GM23248 (cell line): ENCODE measurements at regions of chr5 and their contacts with region 1.

Region 1: GRCh38 chr5:170100066-170100943 is 5.4 kb upstream of the FOXI1 start:
- DNase-seq: peak; percentile 79
- H3K4me3 ChIP-seq: no peak overlapping the region
- H3K27ac ChIP-seq: no peak overlapping the region
- H3K4me1 ChIP-seq: 0 out of 2 replicates have a peak, but pooled peaks cover 6% of the 10 kb centered on the region
- H3K27me3 ChIP-seq: no peaks in the 10 kb centered on the region

Region 2: DNA sequence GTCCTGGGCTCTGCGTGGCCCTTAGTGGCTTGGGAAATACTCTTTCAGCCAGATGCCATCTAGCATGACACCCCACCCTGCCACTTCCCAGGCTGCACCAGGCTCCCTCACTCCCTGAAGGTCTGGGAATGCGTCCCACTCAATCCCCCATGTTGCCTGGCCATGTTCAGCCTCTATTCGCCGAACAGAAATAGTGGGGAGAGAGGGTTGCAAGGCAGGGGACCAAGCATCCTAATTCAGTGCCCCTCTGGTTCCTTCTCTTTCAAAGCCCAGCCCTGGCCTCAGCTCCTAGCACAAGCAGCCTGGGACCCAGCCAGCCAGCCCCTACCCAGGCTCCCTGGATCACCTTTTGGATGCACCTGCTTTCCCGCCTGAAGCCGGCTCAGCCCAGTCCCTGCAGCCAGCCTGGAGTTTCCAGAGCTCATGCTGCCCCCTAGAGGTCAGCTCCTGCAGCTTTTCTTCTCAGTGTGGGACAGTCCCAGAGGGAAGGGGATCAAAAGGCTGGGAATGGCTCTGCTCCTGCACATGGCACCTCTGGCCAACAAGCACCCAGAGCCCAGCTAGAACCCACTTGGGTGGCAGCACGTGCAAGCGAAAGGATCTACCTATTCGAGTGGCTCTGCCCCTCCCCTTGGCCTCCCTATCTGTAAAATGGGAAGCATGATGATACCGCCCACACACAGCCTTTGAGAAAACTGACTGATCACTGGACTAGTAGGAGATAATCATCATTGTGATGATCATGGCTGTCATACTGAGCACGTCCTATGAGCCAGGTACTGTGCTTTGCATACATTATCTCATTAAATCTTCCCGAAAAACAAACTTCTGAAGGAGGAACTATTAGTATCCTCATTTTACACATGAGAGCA is 83.7 kb after region 1 on chr5:
- in situ Hi-C with region 1: loop called (anchors 10 kb)
- DNase-seq: peak; percentile 69
- H3K4me3 ChIP-seq: no peak overlapping the region
- H3K27ac ChIP-seq: no peak overlapping the region
- H3K4me1 ChIP-seq: no peaks in the 10 kb centered on the region
- H3K27me3 ChIP-seq: peaks cover 26% of the 10 kb centered on the region; the same call in 1 of the 2 replicates

Region 3: GRCh38 chr5:170420780-170421412 is 320.6 kb after region 1 on chr5:
- in situ Hi-C with region 1: loop called (anchors 25 kb)
- DNase-seq: peak; percentile 72
- H3K4me3 ChIP-seq: no peak overlapping the region
- H3K27ac ChIP-seq: no peak overlapping the region
- H3K4me1 ChIP-seq: no peaks in the 10 kb centered on the region
- H3K27me3 ChIP-seq: peaks cover 57% of the 10 kb centered on the region

Region 4: GRCh38 chr5:170603578-170604565 is 503.6 kb after region 1 on chr5:
- in situ Hi-C with region 1: loop called (anchors 25 kb)
- DNase-seq: peak; percentile 55
- H3K4me3 ChIP-seq: no peak overlapping the region
- H3K27ac ChIP-seq: no peak overlapping the region
- H3K4me1 ChIP-seq: no peaks in the 10 kb centered on the region
- H3K27me3 ChIP-seq: peaks cover 81% of the 10 kb centered on the region